Naive thymus-derived CD4-positive, alpha-beta T cell (primary cell): ENCODE measurements at regions of chr5 and their contacts with region 1.

Region 1: DNA sequence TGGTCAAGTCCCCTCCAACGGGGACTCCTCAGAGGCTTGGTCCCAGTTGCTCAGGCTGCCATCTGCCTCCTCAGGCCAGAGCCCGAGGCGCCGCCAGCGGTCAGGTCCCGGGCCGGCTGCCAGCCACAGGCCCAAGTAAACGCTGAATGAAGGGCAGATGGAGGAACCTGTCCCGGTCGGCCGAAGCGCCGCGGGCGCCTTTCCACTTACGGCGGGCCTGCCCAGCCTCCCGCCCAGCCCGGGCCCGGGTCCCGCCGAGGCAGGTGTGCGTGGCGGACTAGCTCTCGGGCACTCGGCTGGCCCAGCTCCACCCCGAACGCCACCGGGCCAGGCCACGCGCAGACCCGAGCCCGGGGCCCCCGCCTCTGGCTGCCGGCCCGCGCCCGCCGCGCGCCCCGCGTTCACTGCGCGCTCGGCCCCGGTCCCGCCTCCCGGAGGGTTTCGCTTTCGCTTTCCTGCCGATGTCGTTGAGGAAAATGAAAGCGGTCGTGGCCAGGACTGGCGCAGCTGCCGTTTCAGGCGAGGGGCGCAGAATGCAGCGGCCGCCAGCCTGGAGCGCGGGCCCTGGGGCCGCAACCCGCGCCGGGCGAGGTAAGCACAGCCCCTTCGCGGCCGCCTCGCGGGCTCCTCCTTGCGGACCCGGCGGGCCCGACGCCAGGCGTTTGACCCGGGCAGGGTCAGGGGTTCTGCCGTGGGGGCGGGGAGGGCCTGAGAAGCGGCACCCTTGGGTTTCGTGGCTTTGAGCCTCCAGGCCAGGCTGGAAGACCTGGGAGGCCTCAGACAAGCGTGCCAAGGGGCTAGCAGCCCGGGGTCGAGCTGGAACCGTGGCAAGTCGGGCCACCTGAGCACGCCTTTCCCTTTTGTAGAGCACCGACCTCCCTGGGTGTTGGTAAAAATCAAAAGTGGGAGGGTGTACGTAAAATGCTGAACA is 41.2 kb downstream of the SLC22A5 start:
- DNase-seq: peak; percentile 71 to 89 (median 84)
- ATAC-seq: peak; percentile 85
- H3K4me3 ChIP-seq: peak overlapping the region; percentile 81
- H3K4me3 Mint-ChIP-seq: peak overlapping the region; percentile 91 to 99 (median 98)
- H3K27ac ChIP-seq: peak overlapping the region; percentile 98
- H3K27ac Mint-ChIP-seq: peak overlapping the region; percentile 96 to 99 (median 99)
- H3K4me1 ChIP-seq: peaks cover 53 to 65% of the 10 kb centered on the region in 2 donors
- H3K4me1 Mint-ChIP-seq: peaks cover 46 to 86% (median 74%) of the 10 kb centered on the region in 7 donors
- H3K27me3 ChIP-seq: no peaks in the 10 kb centered on the region
- H3K27me3 Mint-ChIP-seq: peaks cover 0 to under 1% (median 0%) of the 10 kb centered on the region in 5 donors

Region 2: GRCh38 chr5:132176987-132177386 is 233.7 kb before region 1 on chr5:
- CTCF ChIA-PET with region 1: no interaction called
- POLR2A ChIA-PET with region 1: no interaction called
- intact Hi-C with region 1: no loop called
- DNase-seq: no peak
- ATAC-seq: peak; percentile 63
- H3K4me3 ChIP-seq: no peak overlapping the region
- H3K4me3 Mint-ChIP-seq: peak overlapping the region in 1 of 10 donors; percentile 8
- H3K27ac ChIP-seq: no peak overlapping the region
- H3K27ac Mint-ChIP-seq: peak overlapping the region in 2 of 9 donors; percentile 35 to 47
- H3K4me1 ChIP-seq: peaks cover 0 to 4% of the 10 kb centered on the region in 2 donors
- H3K4me1 Mint-ChIP-seq: peaks cover 16 to 38% (median 19%) of the 10 kb centered on the region in 7 donors
- H3K27me3 ChIP-seq: no peaks in the 10 kb centered on the region
- H3K27me3 Mint-ChIP-seq: peaks cover 0 to 15% (median 4%) of the 10 kb centered on the region in 5 donors

Region 3: DNA sequence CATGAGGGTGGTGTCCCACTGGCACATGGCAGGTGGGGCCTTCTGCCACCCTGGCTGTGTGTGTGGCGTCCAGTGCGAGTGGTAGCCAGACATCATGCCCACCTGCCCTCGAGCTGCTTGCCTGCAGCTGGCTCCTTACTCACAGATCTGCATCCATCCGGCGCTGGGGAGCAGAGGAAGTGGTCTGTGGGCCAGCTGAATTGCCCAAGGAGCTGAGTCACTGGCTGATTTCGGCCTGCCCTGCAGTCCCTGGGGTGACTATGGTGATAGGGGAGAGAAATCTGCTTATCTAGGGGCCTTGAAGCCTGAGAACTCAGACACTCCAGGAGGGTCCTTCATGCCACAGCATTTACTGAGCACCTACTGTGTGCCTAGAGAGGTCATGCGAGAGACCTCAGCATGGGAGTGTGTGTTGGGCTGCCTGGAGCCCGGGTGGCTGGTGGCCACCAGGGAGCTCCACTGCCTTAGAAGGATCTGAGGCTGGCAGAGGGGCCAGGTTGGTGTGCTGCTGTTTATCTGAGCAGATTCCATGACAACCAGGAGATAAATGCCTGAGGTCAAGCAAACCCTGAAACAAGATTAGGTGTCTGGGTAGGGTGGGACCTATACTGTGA is 15.9 kb after region 1 on chr5:
- CTCF ChIA-PET with region 1: interaction called, 6 read pairs
- POLR2A ChIA-PET with region 1: interaction called, 38 read pairs
- intact Hi-C with region 1: loop called (anchors 1 to 2 kb)
- DNase-seq: peak in 3 of 9 donors; percentile 26 to 71 (median 29)
- ATAC-seq: peak; percentile 63
- H3K4me3 ChIP-seq: peak overlapping the region; percentile 41
- H3K4me3 Mint-ChIP-seq: peak overlapping the region; percentile 60 to 92 (median 75)
- H3K27ac ChIP-seq: peak overlapping the region; percentile 83
- H3K27ac Mint-ChIP-seq: peak overlapping the region; percentile 88 to 99 (median 97)
- H3K4me1 ChIP-seq: peaks cover 97 to 98% of the 10 kb centered on the region in 2 donors
- H3K4me1 Mint-ChIP-seq: peaks cover 78 to 98% (median 97%) of the 10 kb centered on the region in 7 donors
- H3K27me3 ChIP-seq: no peaks in the 10 kb centered on the region
- H3K27me3 Mint-ChIP-seq: no peaks in the 10 kb centered on the region

Region 4: GRCh38 chr5:132456296-132457001 is 45.7 kb after region 1 on chr5:
- CTCF ChIA-PET with region 1: interaction called, 18 read pairs
- POLR2A ChIA-PET with region 1: interaction called, 36 read pairs
- intact Hi-C with region 1: no loop called
- DNase-seq: peak in 8 of 9 donors; percentile 55 to 80 (median 70)
- ATAC-seq: peak; percentile 84
- H3K4me3 ChIP-seq: peak overlapping the region; percentile 40
- H3K4me3 Mint-ChIP-seq: peak overlapping the region; percentile 60 to 85 (median 78)
- H3K27ac ChIP-seq: peak overlapping the region; percentile 77
- H3K27ac Mint-ChIP-seq: peak overlapping the region; percentile 93 to 100 (median 99)
- H3K4me1 ChIP-seq: peaks cover 89 to 96% of the 10 kb centered on the region in 2 donors
- H3K4me1 Mint-ChIP-seq: peaks cover 81 to 94% (median 91%) of the 10 kb centered on the region in 7 donors
- H3K27me3 ChIP-seq: no peaks in the 10 kb centered on the region
- H3K27me3 Mint-ChIP-seq: no peaks in the 10 kb centered on the region

Region 5: DNA sequence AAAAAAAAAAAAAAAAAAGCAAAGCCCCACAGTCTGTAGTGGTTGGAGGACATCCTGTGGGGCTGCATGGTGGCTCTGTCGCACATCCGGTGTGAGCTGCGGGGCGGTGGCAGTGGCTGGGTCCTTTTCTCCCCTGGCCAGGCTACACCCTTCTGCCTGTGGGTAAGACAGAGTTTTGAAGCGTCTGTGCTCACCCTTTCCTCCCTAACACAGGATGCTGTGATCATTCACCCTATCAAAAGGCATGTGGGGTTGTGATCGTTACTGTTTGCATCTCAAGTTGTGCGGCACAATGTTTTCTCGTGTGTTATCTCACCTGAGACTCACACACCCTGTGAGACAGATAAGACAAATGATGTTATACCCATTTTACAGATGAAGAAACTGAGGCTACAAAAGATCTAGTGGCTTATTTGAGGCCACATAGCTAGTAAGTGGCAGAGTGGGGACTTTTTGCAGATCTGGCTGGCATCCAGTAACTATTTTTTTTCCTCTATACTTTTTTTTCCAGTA is 62.4 kb after region 1 on chr5:
- CTCF ChIA-PET with region 1: interaction called, 7 read pairs
- POLR2A ChIA-PET with region 1: interaction called, 60 read pairs
- intact Hi-C with region 1: no loop called
- DNase-seq: peak; percentile 53 to 93 (median 88)
- ATAC-seq: peak; percentile 85
- H3K4me3 ChIP-seq: no peak overlapping the region
- H3K4me3 Mint-ChIP-seq: peak overlapping the region in 9 of 10 donors; percentile 2 to 77 (median 68)
- H3K27ac ChIP-seq: peak overlapping the region; percentile 62
- H3K27ac Mint-ChIP-seq: peak overlapping the region; percentile 89 to 97 (median 96)
- H3K4me1 ChIP-seq: peaks cover 48 to 88% of the 10 kb centered on the region in 2 donors
- H3K4me1 Mint-ChIP-seq: peaks cover 45 to 89% (median 87%) of the 10 kb centered on the region in 7 donors
- H3K27me3 ChIP-seq: no peaks in the 10 kb centered on the region
- H3K27me3 Mint-ChIP-seq: no peaks in the 10 kb centered on the region

Region 6: GRCh38 chr5:132500931-132501630 is 90.4 kb after region 1 on chr5:
- CTCF ChIA-PET with region 1: interaction called, 26 read pairs
- POLR2A ChIA-PET with region 1: interaction called, 152 read pairs
- intact Hi-C with region 1: loop called in 1 of 2 experiments (anchors 1 kb)
- DNase-seq: peak; percentile 52 to 85 (median 76)
- ATAC-seq: peak; percentile 52
- H3K4me3 ChIP-seq: no peak overlapping the region
- H3K4me3 Mint-ChIP-seq: peak overlapping the region in 1 of 10 donors; percentile 48
- H3K27ac ChIP-seq: peak overlapping the region; percentile 99
- H3K27ac Mint-ChIP-seq: peak overlapping the region in 8 of 9 donors; percentile 26 to 98 (median 82)
- H3K4me1 ChIP-seq: peaks cover 12 to 21% of the 10 kb centered on the region in 2 donors
- H3K4me1 Mint-ChIP-seq: peaks cover 6 to 48% (median 31%) of the 10 kb centered on the region in 7 donors
- H3K27me3 ChIP-seq: no peaks in the 10 kb centered on the region
- H3K27me3 Mint-ChIP-seq: peaks cover 0 to 5% (median 0%) of the 10 kb centered on the region in 5 donors

Region 7: DNA sequence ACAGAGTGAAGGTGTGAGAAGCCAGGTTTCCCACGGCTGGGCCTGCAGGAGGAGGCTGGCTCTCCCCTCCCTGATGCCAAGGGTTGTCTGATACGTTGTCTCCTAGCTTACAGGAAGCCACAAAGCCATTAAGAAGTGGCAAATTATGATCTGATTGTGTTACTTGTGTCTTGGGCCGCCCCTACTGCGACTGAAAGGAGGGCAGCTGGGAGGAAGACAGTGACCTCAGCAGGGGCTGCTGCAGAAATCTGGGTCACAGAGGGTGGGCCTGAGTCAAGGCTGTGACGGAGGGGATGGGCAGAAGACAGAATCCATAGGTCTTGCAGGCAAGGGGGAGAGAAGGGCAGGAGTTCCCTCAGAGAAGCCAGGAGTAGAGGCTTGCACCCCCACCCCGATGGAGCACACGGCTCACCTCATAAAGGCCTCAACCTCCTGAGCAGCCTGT is 1056.6 kb after region 1 on chr5:
- CTCF ChIA-PET with region 1: no interaction called
- POLR2A ChIA-PET with region 1: no interaction called
- intact Hi-C with region 1: no loop called
- DNase-seq: no peak
- ATAC-seq: peak; percentile 62
- H3K4me3 ChIP-seq: no peak overlapping the region
- H3K4me3 Mint-ChIP-seq: no peak overlapping the region
- H3K27ac ChIP-seq: no peak overlapping the region
- H3K27ac Mint-ChIP-seq: no peak overlapping the region
- H3K4me1 ChIP-seq: peaks cover 0 to 16% of the 10 kb centered on the region in 2 donors
- H3K4me1 Mint-ChIP-seq: peaks cover 0 to 17% (median 4%) of the 10 kb centered on the region in 7 donors
- H3K27me3 ChIP-seq: no peaks in the 10 kb centered on the region
- H3K27me3 Mint-ChIP-seq: peaks cover 5 to 21% (median 10%) of the 10 kb centered on the region in 5 donors